IMR-90 (cell line): ENCODE measurements at regions of chr7 and their contacts with region 1.

Region 1: DNA sequence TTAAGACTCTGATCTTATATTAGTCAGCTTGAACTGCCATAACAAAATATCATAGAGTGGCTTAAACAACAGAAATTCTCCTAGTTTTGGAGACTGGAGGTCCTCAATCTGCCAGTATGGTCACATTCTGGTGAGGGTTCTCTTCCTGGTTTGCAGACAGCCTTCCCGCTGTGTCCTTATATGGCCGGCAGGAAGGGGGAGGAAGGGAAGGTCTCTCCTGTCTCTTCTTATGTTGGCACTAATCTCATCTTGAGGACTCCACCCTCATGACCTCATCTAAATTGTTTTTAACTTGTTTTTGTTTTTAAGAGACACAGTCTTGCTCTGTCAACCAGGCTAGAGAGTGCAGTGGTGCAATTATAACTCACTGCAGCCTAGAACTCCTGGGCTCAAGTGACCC is 53.1 kb downstream of the VPS41 start:
- DNase-seq: no peak
- ATAC-seq: no peak
- H3K4me3 ChIP-seq: no peak overlapping the region
- H3K27ac ChIP-seq: no peak overlapping the region
- H3K4me1 ChIP-seq: no peaks in the 10 kb centered on the region
- H3K27me3 ChIP-seq: no peaks in the 10 kb centered on the region
- CTCF ChIP-seq: no peak
- POLR2A ChIP-seq: no peak
- RAD21 ChIP-seq: no peak

Region 2: DNA sequence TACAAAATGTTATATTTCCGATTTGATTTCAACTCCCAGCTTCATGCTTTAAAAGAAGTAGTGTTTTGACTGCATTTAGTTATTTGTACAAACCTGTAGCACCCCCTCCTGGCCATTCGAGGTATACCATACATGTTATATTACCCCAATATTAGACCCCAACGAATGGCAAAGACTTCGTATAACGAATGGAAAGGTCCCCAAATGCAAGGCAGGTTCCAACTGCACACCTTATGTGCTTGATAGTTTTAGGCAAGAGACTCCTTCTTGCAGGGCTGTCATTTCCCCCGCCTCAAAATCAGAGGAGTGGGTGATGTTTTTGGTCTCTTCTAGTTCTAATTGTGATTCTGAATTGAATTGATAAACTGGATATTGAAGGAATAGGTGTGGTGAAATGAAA is 481.4 kb before region 1 on chr7:
- CTCF ChIA-PET with region 1: no interaction called
- POLR2A ChIA-PET with region 1: no interaction called
- dilution Hi-C with region 1: no loop called
- in situ Hi-C with region 1: no loop called
- intact Hi-C with region 1: no loop called
- DNase-seq: peak; percentile 34
- ATAC-seq: peak; percentile 57
- H3K4me3 ChIP-seq: no peak overlapping the region
- H3K27ac ChIP-seq: no peak overlapping the region
- H3K4me1 ChIP-seq: no peaks in the 10 kb centered on the region
- H3K27me3 ChIP-seq: no peaks in the 10 kb centered on the region
- CTCF ChIP-seq: peak; percentile 55
- POLR2A ChIP-seq: no peak
- RAD21 ChIP-seq: peak; percentile 34; the same call in 1 of the 2 replicates

Region 3: DNA sequence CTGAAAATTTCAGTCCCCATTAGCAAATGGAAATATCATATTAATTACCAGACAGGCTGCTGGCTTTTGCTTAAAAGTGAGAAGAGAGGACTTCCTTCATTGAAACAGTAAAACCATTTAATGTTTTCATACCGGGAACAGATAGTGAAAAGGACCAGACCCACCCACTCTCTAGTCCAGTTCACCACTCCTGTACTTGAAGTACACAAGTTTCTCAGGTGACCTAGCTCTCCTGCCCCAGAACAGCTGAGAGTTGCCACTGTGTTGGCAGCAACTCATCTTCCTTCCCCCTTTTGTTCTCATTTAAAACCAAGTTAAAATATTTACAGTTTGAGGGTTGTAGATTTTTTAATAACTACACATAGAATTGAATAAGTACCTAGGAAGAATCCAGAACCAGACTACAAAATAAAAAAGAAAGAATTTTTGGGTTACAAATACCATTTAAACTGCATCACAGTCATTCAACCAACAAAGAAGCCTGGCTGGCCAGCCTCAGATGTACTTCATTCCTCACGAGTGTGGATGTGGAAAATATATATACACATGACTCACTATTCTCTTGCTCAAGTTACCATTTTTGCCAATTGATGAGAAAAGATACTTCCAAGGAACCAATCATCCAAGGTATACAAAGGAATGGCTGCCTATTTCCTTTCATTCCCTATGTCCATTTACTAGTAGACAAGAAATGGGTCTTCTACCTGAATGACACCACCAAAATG is 15.0 kb before region 1 on chr7:
- CTCF ChIA-PET with region 1: no interaction called
- POLR2A ChIA-PET with region 1: no interaction called
- dilution Hi-C with region 1: no loop called
- in situ Hi-C with region 1: no loop called
- intact Hi-C with region 1: loop called (anchors 1 kb)
- DNase-seq: peak; percentile 93
- ATAC-seq: peak; percentile 92
- H3K4me3 ChIP-seq: no peak overlapping the region
- H3K27ac ChIP-seq: peak overlapping the region; percentile 92
- H3K4me1 ChIP-seq: peaks cover 9% of the 10 kb centered on the region
- H3K27me3 ChIP-seq: no peaks in the 10 kb centered on the region
- CTCF ChIP-seq: no peak
- POLR2A ChIP-seq: no peak
- RAD21 ChIP-seq: no peak

Region 4: GRCh38 chr7:39407137-39407536 is 551.3 kb after region 1 on chr7:
- CTCF ChIA-PET with region 1: no interaction called
- POLR2A ChIA-PET with region 1: no interaction called
- dilution Hi-C with region 1: no loop called
- in situ Hi-C with region 1: no loop called
- intact Hi-C with region 1: no loop called
- DNase-seq: no peak
- ATAC-seq: no peak
- H3K4me3 ChIP-seq: no peak overlapping the region
- H3K27ac ChIP-seq: no peak overlapping the region
- H3K4me1 ChIP-seq: no peaks in the 10 kb centered on the region
- H3K27me3 ChIP-seq: no peaks in the 10 kb centered on the region
- CTCF ChIP-seq: no peak
- POLR2A ChIP-seq: no peak
- RAD21 ChIP-seq: no peak